Caco-2 (cell line): ENCODE measurements at regions of chr1 and their contacts with region 1.

Region 1: DNA sequence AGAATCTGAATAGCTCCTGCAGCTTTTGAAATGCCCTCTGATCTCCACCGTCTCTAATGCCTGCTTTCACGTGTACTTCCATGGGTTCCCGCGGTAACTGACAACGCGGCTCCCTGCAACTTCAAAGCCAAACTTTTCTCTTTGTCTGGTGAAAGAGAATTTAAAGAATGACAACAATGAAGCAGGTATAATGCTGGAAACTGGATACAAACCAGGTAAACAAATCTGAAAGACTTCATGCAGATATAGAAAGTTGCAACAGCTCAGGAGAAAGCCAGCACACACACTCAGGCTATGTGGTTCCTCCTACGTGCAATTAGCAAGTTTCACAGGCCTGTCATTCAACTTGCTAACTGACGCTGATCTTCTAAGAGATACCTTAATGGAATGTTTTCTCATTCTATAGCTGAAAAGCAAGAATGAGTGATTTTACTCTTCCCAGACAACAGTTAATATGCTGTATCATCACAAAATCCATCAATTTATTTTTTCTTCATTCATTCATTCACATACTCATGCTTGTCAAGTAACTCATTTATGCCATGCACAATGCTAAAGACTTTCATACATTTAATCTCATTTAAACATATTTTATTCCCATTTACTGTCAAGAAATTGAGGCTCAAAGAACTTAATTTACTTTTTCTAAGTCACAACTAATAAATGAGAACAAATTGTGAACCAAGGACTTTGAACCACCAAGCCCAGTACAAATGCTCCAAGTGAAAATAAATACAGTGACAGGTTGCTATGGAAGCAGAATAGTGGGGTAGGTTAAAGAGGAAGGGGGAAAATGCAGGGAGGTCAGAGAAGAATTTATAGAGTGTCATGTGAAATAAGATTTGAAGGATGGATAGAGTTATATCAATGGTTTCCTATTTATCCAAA is 202.7 kb upstream of the SNX7 start:
- DNase-seq: peak; percentile 69 to 71
- H3K4me3 ChIP-seq: 0 out of 2 replicates have a peak overlapping the region, but pooled peaks have one; percentile 14
- H3K4me3 Mint-ChIP-seq: peak overlapping the region; percentile 58
- H3K27ac Mint-ChIP-seq: peak overlapping the region; percentile 69
- H3K4me1 ChIP-seq: peaks cover 33% of the 10 kb centered on the region
- H3K4me1 Mint-ChIP-seq: peaks cover 23% of the 10 kb centered on the region
- H3K27me3 ChIP-seq: no peaks in the 10 kb centered on the region
- H3K27me3 Mint-ChIP-seq: no peaks in the 10 kb centered on the region
- CTCF ChIP-seq: no peak

Region 2: DNA sequence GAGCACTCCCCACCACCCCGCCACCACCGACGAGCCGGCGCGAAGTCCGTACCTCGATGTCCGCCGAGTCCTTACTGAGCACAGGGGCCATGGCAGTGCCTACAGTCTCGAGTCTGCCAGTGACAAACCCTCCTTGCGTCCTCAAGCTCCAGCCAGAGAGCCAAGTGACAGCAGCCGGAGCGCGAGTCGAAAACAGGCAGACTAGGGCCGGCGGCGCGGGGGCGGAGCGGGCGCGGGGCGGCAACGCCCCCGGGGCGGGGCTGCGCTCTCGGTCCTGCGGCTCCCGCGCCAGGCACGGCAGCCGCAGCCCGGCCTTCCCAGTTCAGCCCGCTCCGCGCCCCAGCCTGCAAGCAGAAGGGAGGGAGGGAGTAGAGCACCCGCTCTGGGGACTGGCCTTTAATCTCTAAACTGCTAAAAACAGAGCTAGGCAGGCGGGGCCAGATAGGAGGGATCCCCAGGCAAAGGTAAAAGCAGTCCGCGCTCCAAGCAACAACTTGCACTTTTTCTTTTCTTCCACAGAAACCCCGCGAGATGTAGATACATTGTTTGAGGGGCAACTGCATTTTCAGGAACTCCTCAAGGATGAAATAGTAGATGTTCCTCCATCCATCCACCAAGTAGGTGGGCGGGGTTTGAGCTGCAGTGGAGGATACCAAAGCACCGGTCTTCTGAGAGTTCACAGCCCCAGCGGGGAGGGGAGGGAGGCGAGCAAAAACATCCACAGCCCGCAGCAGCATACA is 537.8 kb before region 1 on chr1 and contains the start of gene DPYD:
- CTCF ChIA-PET with region 1: no interaction called
- POLR2A ChIA-PET with region 1: no interaction called
- intact Hi-C with region 1: loop called (anchors 5 kb)
- DNase-seq: peak; percentile 81 to 85
- H3K4me3 ChIP-seq: peak within 1 kb of the TSS; percentile 59
- H3K4me3 Mint-ChIP-seq: peak within 1 kb of the TSS; percentile 91
- H3K27ac Mint-ChIP-seq: no peak within 1 kb of the TSS
- H3K4me1 ChIP-seq: no peaks in the 10 kb centered on the region
- H3K4me1 Mint-ChIP-seq: peaks cover 13% of the 10 kb centered on the region
- H3K27me3 ChIP-seq: no peaks in the 10 kb centered on the region
- H3K27me3 Mint-ChIP-seq: no peaks in the 10 kb centered on the region
- CTCF ChIP-seq: no peak
- total RNA-seq, gene DPYD: 7.0 and 7.6 TPM in 2 replicates

Region 3: GRCh38 chr1:98210064-98210463 is 248.8 kb before region 1 on chr1:
- CTCF ChIA-PET with region 1: no interaction called
- POLR2A ChIA-PET with region 1: no interaction called
- intact Hi-C with region 1: loop called (anchors 1 kb)
- DNase-seq: peak; percentile 54 to 61
- H3K4me3 ChIP-seq: no peak overlapping the region
- H3K4me3 Mint-ChIP-seq: peak overlapping the region; percentile 76
- H3K27ac Mint-ChIP-seq: peak overlapping the region; percentile 84
- H3K4me1 ChIP-seq: peaks cover 56% of the 10 kb centered on the region
- H3K4me1 Mint-ChIP-seq: peaks cover 20% of the 10 kb centered on the region
- H3K27me3 ChIP-seq: no peaks in the 10 kb centered on the region
- H3K27me3 Mint-ChIP-seq: no peaks in the 10 kb centered on the region
- CTCF ChIP-seq: no peak

Region 4: GRCh38 chr1:98323906-98324358 is 134.9 kb before region 1 on chr1:
- CTCF ChIA-PET with region 1: no interaction called
- POLR2A ChIA-PET with region 1: no interaction called
- intact Hi-C with region 1: loop called (anchors 5 kb)
- DNase-seq: peak; percentile 25 to 67
- H3K4me3 ChIP-seq: no peak overlapping the region
- H3K4me3 Mint-ChIP-seq: peak overlapping the region; percentile 16
- H3K27ac Mint-ChIP-seq: peak overlapping the region; percentile 73
- H3K4me1 ChIP-seq: peaks cover 17% of the 10 kb centered on the region
- H3K4me1 Mint-ChIP-seq: peaks cover 28% of the 10 kb centered on the region
- H3K27me3 ChIP-seq: no peaks in the 10 kb centered on the region
- H3K27me3 Mint-ChIP-seq: no peaks in the 10 kb centered on the region
- CTCF ChIP-seq: no peak

Region 5: DNA sequence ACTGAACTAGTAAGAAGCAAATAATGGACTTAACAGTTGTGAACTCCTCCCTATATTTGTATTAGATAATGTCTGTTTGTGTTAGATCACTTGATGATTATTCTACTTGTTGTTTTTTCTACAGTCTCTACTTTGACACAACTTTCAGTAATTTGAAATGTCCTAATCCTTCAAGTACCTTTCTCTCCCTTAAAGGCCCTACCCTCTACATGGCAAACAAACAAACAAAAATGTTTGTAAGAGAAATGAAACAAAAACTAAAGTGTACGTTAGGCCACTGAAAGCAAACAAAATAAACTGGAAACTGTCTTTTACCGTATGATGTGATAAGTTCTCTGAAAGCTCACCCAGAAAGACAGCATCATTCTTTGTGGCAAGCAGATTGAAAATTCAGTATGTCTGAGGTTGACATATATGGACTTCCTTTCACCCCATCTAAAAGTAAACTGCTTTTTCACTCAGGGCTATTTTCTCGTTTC is 53.2 kb before region 1 on chr1:
- CTCF ChIA-PET with region 1: no interaction called
- POLR2A ChIA-PET with region 1: no interaction called
- intact Hi-C with region 1: loop called (anchors 5 kb)
- DNase-seq: no peak
- H3K4me3 ChIP-seq: no peak overlapping the region
- H3K4me3 Mint-ChIP-seq: peak overlapping the region; percentile 36
- H3K27ac Mint-ChIP-seq: no peak overlapping the region
- H3K4me1 ChIP-seq: peaks cover 14% of the 10 kb centered on the region
- H3K4me1 Mint-ChIP-seq: no peaks in the 10 kb centered on the region
- H3K27me3 ChIP-seq: no peaks in the 10 kb centered on the region
- H3K27me3 Mint-ChIP-seq: no peaks in the 10 kb centered on the region
- CTCF ChIP-seq: no peak

Region 6: GRCh38 chr1:98437545-98437944 is 21.3 kb before region 1 on chr1:
- CTCF ChIA-PET with region 1: no interaction called
- POLR2A ChIA-PET with region 1: no interaction called
- intact Hi-C with region 1: loop called (anchors 1 kb)
- DNase-seq: peak; percentile 41 to 61
- H3K4me3 ChIP-seq: no peak overlapping the region
- H3K4me3 Mint-ChIP-seq: no peak overlapping the region
- H3K27ac Mint-ChIP-seq: peak overlapping the region; percentile 1
- H3K4me1 ChIP-seq: peaks cover 15% of the 10 kb centered on the region
- H3K4me1 Mint-ChIP-seq: peaks cover 13% of the 10 kb centered on the region
- H3K27me3 ChIP-seq: no peaks in the 10 kb centered on the region
- H3K27me3 Mint-ChIP-seq: no peaks in the 10 kb centered on the region
- CTCF ChIP-seq: no peak

Region 7: DNA sequence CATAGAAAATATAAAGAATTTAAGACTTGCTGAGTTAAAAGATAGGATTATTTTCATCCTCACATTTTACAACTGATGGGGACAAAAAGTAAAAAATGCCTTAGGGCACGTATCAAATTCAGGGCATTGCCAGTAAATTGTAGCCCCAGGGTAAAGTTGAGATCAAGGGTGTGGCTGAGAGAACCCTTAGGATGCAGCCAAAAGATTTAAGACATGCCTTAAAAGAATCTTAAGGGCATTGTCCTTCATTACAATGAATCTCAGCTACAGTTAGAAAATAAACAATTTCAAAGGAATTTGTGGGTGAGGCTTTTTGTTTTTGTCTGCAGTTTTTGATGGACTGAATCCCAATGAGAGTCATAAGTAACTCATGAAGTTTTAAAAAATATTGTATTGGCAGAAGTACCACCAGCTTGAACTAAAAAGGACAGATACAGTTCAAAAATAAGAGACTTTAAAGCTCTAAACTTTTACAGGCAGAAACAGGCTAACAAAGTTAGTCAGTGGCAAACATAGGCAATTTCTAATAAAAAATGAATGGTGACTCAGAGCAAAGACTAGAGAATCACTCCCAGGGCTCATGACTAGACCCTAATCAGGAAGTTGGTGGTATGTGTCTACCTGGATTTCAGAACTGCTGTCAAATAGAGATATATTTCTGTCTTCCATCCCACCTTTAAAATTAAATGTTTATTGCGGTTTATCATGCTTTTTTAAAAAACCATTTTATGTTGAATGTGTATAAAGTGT is 37.6 kb after region 1 on chr1:
- CTCF ChIA-PET with region 1: no interaction called
- POLR2A ChIA-PET with region 1: no interaction called
- intact Hi-C with region 1: no loop called
- DNase-seq: no peak
- H3K4me3 ChIP-seq: no peak overlapping the region
- H3K4me3 Mint-ChIP-seq: no peak overlapping the region
- H3K27ac Mint-ChIP-seq: no peak overlapping the region
- H3K4me1 ChIP-seq: no peaks in the 10 kb centered on the region
- H3K4me1 Mint-ChIP-seq: no peaks in the 10 kb centered on the region
- H3K27me3 ChIP-seq: no peaks in the 10 kb centered on the region
- H3K27me3 Mint-ChIP-seq: no peaks in the 10 kb centered on the region
- CTCF ChIP-seq: no peak